ENCODE measurements at regions of chr15 and their contacts with region 1.

Region 1: DNA sequence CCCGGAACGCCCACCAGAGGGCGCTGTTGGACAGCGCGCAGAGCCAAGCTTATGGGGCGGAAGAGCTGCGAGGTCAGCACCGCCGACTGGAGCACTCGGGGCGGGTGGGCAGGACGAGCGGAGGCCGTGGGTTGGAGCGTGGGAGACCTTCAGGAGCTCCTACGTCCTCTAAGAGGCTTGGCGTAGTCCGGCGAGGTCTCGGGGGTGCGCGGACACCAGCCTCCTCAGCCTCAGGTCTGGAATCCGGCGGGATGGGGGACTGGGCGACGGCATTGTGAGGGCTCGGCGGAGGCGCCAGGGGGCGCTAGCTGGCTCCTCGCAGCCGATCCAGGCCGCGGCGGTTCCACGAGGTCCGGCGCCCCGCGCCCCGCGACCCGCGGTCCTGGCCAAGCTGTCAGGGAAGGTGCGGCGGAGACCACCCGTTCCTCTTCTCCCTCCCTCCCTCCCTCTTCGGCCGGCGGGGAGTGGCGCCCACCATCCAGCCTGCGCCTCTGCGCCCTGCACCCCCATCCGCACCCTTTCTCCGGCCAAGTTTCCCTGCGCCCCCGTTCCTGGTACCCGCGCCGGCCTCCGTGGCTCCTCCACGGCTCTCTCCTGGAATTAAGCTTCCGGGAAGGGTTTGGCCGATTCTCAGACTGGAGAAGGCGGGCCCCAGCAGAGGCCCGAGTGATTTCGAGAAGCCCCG is 24.3 kb upstream of the POLG start:
- DNase-seq: peak; percentile 88
- H3K4me3 ChIP-seq: peak overlapping the region in 2 of 3 experiments; percentile 37 to 39
- H3K27ac ChIP-seq: no peak overlapping the region
- H3K4me1 ChIP-seq: no peaks in the 10 kb centered on the region
- H3K27me3 ChIP-seq: peaks cover 53 to 65% of the 10 kb centered on the region in 2 experiments
- CTCF ChIP-seq: peak; percentile 76 to 88
- POLR2A ChIP-seq: no peak

Region 2: GRCh38 chr15:89206908-89207331 is 152.0 kb before region 1 on chr15:
- CTCF ChIA-PET with region 1: interaction called, 23 read pairs
- POLR2A ChIA-PET with region 1: no interaction called
- dilution Hi-C with region 1: no loop called
- intact Hi-C with region 1: no loop called
- DNase-seq: peak; percentile 73
- H3K4me3 ChIP-seq: no peak overlapping the region
- H3K27ac ChIP-seq: no peak overlapping the region
- H3K4me1 ChIP-seq: peaks cover 2% of the 10 kb centered on the region
- H3K27me3 ChIP-seq: no peaks in the 10 kb centered on the region
- CTCF ChIP-seq: peak; percentile 96 to 100
- POLR2A ChIP-seq: no peak

Region 3: DNA sequence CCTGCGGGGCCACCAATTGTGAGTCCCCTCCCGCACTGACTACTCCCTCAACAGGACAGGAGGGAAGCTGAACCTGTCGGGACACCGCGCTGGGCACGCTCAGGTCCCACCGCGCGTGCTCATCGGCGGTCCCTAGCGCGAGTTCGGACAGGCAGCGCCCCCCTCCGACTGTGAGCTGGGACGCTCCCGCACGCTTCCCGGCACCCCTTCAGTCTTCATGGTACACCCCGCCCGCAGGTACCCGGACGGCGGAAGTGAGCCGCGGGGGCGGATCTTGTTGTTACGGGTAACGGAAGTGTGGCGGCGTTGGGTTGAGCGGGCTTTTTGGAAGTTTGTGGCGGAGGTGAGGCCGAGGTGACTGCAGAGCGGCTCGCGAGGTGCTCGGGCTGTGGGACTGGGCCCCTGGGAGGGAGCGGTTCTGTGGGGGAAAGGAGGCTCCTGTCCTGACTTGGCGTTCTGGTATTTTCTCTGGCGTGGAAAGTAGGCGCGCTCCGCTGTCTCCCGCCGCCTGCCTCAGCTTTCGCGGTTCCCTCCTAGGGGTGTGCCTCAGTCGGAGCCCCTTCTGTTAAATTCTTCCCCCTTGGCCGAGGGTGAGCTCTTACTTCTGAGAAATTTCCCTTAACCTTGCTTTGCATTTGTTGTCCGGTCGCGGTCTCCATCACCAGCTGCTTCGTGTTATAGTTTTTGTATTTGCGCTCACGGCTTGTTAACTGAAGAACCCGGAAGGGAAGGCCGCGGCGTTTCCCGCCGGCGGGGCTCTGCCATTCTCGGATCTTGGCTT is 115.0 kb before region 1 on chr15 and contains the start of gene FANCI:
- CTCF ChIA-PET with region 1: no interaction called
- POLR2A ChIA-PET with region 1: no interaction called
- dilution Hi-C with region 1: no loop called
- intact Hi-C with region 1: no loop called
- DNase-seq: peak; percentile 92
- H3K4me3 ChIP-seq: peak within 1 kb of the TSS; percentile 81 to 92 (median 89)
- H3K27ac ChIP-seq: peak within 1 kb of the TSS; percentile 65
- H3K4me1 ChIP-seq: peaks cover 15% of the 10 kb centered on the region
- H3K27me3 ChIP-seq: peaks cover 5 to 7% of the 10 kb centered on the region in 2 experiments
- CTCF ChIP-seq: peak; percentile 45 to 51
- POLR2A ChIP-seq: no peak
- total RNA-seq, gene FANCI: 65.9 and 74.7 TPM in 2 replicates

Region 4: GRCh38 chr15:89293012-89293411 is 65.9 kb before region 1 on chr15:
- CTCF ChIA-PET with region 1: no interaction called
- POLR2A ChIA-PET with region 1: no interaction called
- dilution Hi-C with region 1: no loop called
- intact Hi-C with region 1: no loop called
- DNase-seq: no peak
- H3K4me3 ChIP-seq: no peak overlapping the region
- H3K27ac ChIP-seq: no peak overlapping the region
- H3K4me1 ChIP-seq: no peaks in the 10 kb centered on the region
- H3K27me3 ChIP-seq: no peaks in the 10 kb centered on the region
- CTCF ChIP-seq: no peak
- POLR2A ChIP-seq: no peak

Region 5: GRCh38 chr15:89346516-89347231 is 12.2 kb before region 1 on chr15:
- CTCF ChIA-PET with region 1: interaction called, 62 read pairs
- POLR2A ChIA-PET with region 1: no interaction called
- dilution Hi-C with region 1: no loop called
- intact Hi-C with region 1: no loop called
- DNase-seq: no peak
- H3K4me3 ChIP-seq: no peak overlapping the region
- H3K27ac ChIP-seq: no peak overlapping the region
- H3K4me1 ChIP-seq: no peaks in the 10 kb centered on the region
- H3K27me3 ChIP-seq: peaks cover 6 to 7% of the 10 kb centered on the region in 2 experiments
- CTCF ChIP-seq: no peak
- POLR2A ChIP-seq: no peak

Region 6: GRCh38 chr15:89395996-89396395 is 37.1 kb after region 1 on chr15:
- CTCF ChIA-PET with region 1: interaction called, 58 read pairs
- POLR2A ChIA-PET with region 1: no interaction called
- dilution Hi-C with region 1: no loop called
- intact Hi-C with region 1: no loop called
- DNase-seq: no peak
- H3K4me3 ChIP-seq: no peak overlapping the region
- H3K27ac ChIP-seq: no peak overlapping the region
- H3K4me1 ChIP-seq: no peaks in the 10 kb centered on the region
- H3K27me3 ChIP-seq: peaks cover 83 to 93% of the 10 kb centered on the region in 2 experiments
- CTCF ChIP-seq: no peak
- POLR2A ChIP-seq: no peak

Region 7: DNA sequence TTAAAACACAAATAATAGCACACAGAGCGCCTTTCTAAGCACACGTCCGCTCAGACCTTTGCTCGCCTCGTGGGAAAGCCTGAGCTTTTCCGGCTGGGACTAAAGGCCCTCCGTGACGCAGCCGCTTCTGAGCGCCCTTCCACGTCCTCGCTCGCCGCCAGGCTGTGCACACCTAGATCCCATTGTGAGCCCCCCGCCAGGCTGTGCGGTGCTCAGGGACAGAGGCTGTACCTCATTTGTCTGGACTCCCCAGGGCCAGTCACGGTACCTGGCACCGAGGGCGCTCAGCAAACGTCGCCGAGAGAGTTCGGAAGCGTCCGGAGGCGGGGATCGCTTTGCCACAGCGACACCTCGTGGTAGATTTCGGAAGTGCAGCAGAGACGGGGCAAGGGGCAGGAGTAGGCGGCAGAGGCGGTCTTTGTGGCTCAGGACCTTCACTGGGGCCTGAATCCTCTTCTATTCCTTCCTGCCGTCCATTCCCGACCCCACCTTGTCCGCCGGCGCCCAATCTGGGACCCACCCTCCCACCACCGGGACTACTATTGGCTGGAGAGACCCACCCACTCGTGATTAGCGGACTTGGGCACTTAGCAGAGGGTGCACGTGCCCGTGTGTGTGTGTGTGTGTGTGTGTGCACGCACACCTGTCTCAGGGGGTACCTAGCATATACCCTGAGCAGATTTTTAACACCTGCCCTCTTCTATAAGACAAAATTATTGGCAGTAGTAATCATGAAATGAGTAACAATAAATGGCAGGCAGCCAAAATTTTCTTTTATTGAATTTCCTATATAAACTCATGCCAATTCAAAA is 71.8 kb after region 1 on chr15:
- CTCF ChIA-PET with region 1: interaction called, 221 read pairs
- POLR2A ChIA-PET with region 1: no interaction called
- dilution Hi-C with region 1: no loop called
- intact Hi-C with region 1: loop called (anchors 1 kb)
- DNase-seq: peak; percentile 74
- H3K4me3 ChIP-seq: peak overlapping the region in 2 of 3 experiments; percentile 25 to 26
- H3K27ac ChIP-seq: no peak overlapping the region
- H3K4me1 ChIP-seq: peaks cover 3% of the 10 kb centered on the region
- H3K27me3 ChIP-seq: peaks cover 0 to 15% of the 10 kb centered on the region in 2 experiments
- CTCF ChIP-seq: peak; percentile 96 to 99
- POLR2A ChIP-seq: no peak

Region 8: DNA sequence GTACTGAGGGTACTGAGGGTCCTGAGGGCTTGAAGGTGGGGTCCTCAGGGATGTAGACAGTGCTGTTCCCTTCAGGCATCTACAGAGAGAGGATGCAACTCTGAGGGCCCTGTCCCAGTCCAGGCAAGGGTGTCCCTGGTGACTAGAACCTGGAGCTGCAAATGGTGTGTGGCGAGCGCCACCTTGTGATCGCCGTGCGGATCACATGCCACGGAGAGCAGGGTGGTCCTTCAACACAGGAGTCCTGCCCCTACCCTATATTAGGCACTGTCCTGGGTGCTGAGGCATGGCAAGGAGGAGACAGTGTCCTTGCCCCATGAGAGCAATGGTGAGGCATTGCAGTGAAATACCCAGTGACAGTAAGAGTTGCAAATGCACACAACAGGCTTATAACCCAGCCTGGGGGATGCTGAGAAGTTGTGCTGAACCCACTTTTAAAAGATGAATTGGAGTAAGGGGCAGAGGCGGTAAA is 113.9 kb after region 1 on chr15:
- CTCF ChIA-PET with region 1: interaction called, 262 read pairs
- POLR2A ChIA-PET with region 1: no interaction called
- dilution Hi-C with region 1: no loop called
- intact Hi-C with region 1: loop called (anchors 1 kb)
- DNase-seq: peak; percentile 67
- H3K4me3 ChIP-seq: no peak overlapping the region
- H3K27ac ChIP-seq: no peak overlapping the region
- H3K4me1 ChIP-seq: no peaks in the 10 kb centered on the region
- H3K27me3 ChIP-seq: peaks cover 13 to 19% of the 10 kb centered on the region in 2 experiments
- CTCF ChIP-seq: peak; percentile 81 to 93
- POLR2A ChIP-seq: no peak

Measured in endothelial cell of umbilical vein (primary cell).